ENCODE measurements at regions of chr14 and their contacts with region 1.

Region 1: DNA sequence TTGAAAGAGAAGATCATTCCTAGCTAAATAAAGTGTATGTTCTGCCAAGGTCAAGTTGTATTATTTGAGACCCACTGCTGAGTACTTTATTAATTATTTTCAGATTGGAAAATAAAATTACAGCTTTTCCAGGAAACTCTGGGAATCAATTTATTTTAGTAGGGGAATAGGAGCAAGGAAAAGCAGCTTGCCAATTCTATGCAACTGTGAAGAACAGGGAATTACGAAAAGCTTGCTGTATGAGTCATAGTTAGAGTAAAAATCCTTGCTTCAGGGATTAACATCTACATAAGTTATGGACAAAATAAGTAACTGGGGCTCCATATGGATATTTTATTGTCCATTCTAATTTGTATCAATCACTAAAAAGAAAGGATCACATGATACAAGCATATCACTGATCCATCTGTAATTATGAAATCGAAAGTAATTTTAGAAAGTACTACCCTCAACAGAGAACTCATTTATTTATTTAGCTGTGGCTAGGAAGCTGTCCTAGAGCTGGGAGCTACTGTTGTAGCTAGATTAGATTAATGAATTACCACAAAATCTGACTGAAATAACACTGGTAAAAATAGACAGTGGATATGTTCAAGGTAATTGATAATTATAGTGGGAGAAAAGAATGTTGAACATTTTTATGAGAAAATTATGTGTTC is 303.5 kb upstream of the NPAS3 start:
- DNase-seq: no peak
- H3K4me3 ChIP-seq: no peak overlapping the region
- CTCF ChIP-seq: no peak
- POLR2A ChIP-seq: no peak

Region 2: GRCh38 chr14:32047791-32048190 is 587.4 kb before region 1 on chr14:
- intact Hi-C with region 1: no loop called
- DNase-seq: no peak
- H3K4me3 ChIP-seq: no peak overlapping the region
- CTCF ChIP-seq: no peak
- POLR2A ChIP-seq: no peak

Region 3: GRCh38 chr14:32457213-32457920 is 177.8 kb before region 1 on chr14:
- intact Hi-C with region 1: no loop called
- DNase-seq: no peak
- H3K4me3 ChIP-seq: no peak overlapping the region
- CTCF ChIP-seq: no peak
- POLR2A ChIP-seq: no peak

Region 4: DNA sequence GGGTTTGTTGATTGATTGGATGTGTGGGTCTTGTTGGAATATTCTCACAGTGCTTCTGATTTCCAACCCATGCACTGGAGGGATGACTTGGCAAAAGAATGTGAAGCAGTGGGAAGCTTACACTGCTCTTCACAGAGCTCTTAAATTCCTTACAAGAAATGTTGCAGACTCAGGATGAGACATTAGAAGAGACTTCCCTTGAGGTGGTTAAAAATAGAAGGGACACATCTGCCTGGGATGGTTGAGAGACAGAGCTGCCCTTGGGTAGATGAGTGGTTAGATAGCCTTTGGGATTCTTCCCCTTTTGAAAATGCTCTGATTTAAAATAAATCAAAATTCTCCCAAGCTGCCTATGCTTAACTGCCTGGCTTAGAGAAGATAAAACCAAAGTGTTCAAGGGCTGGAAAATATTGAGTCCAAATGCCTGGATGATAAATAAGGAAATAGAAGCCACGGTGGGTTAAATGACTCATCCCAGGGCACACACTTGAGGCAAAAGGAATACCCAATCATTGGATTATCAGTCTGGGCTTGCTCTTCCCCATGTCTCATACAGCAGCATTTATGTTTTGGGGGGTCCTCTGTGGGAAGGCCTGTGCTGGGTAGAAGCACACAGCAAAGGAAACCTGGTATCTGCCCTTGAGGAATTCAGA is 41.8 kb before region 1 on chr14:
- intact Hi-C with region 1: loop called (anchors 1 kb)
- DNase-seq: no peak
- H3K4me3 ChIP-seq: no peak overlapping the region
- CTCF ChIP-seq: no peak
- POLR2A ChIP-seq: no peak